ENCODE measurements at regions of chr9 and their contacts with region 1.

Region 1: DNA sequence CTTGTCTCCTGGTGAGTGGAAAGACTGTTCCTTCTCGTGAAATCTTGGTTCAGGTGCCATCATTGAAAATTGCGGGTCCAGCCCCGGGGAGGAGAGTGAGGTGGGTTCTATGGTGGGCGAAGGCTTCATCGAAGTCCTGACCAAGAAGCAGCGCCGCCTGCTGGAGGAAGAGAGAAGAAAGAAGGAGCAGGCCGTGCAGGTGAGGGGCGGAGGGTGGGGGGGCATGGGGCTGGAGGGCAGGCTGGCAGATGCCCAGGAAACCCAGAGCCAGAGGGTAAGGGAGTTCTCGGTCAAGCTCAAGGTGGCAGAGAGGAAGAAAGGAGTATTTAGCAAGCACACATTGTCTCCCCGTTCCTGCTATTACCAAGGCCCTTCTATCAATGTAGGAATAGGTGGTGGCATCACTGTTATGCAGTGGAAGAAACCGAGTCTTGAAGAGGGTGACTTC is 24.3 kb upstream of the POMT1 start:
- DNase-seq: peak; percentile 41
- H3K4me3 ChIP-seq: no peak overlapping the region
- H3K27ac ChIP-seq: peak overlapping the region; percentile 84
- H3K4me1 ChIP-seq: peaks cover 66% of the 10 kb centered on the region
- H3K27me3 ChIP-seq: no peaks in the 10 kb centered on the region
- CTCF ChIP-seq: peak; percentile 67

Region 2: GRCh38 chr9:131366761-131367401 is 111.6 kb before region 1 on chr9:
- intact Hi-C with region 1: loop called (anchors 10 kb)
- DNase-seq: peak; percentile 26
- H3K4me3 ChIP-seq: no peak overlapping the region
- H3K27ac ChIP-seq: no peak overlapping the region
- H3K4me1 ChIP-seq: peaks cover 26% of the 10 kb centered on the region
- H3K27me3 ChIP-seq: no peaks in the 10 kb centered on the region
- CTCF ChIP-seq: peak; percentile 63